AG04449 (cell line): ENCODE measurements at regions of chr20 and their contacts with region 1.

Region 1: DNA sequence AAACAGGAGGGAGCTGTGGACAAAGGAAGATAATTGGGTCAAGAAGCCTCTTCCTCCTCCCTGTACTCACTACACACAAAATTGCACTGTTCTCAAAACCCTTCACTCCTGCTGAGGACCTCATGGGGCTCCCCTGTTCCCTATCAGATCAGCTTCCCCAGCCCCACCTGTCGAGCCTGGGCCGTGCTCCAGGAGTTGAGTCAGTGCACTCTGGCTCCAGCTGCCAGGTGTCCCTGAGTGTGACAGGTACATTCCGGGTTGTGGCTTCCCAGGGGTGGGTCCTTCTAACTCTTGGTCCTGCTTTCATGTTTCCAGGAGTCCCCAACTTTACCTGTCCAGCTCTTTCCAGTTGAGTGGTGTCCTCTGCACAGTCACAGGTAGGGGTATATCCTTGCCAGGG is 8.4 kb downstream of the RAB5IF start:
- DNase-seq: no peak
- H3K4me3 ChIP-seq: no peak overlapping the region
- CTCF ChIP-seq: no peak

Region 2: DNA sequence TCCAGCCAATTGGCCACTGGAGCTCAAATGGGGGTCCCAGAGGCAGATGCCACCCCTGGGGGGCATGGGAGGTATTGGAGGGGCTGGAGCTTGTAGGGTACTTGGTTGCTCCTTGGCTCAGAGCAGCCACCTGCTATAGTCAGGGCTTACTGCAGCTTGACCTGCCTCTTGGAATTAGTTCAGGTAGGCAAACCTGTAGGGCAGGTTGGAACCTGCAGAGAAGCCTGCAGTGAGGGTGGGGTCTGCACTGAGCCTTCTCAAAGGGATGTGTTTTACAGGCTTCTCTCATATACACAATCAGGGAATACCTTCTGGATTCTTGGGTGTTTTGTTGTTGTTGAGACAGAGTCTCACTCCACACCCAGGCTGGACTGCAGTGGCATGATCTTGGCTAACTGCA is 166.9 kb before region 1 on chr20:
- CTCF ChIA-PET with region 1: no interaction called
- POLR2A ChIA-PET with region 1: no interaction called
- DNase-seq: no peak
- H3K4me3 ChIP-seq: no peak overlapping the region
- CTCF ChIP-seq: no peak

Region 3: GRCh38 chr20:36624068-36624943 is 10.3 kb after region 1 on chr20:
- CTCF ChIA-PET with region 1: interaction called, 12 read pairs
- POLR2A ChIA-PET with region 1: no interaction called
- DNase-seq: no peak
- H3K4me3 ChIP-seq: no peak overlapping the region
- CTCF ChIP-seq: no peak

Region 4: GRCh38 chr20:36754656-36755222 is 140.8 kb after region 1 on chr20:
- CTCF ChIA-PET with region 1: interaction called, 98 read pairs
- POLR2A ChIA-PET with region 1: no interaction called
- DNase-seq: peak; percentile 10
- H3K4me3 ChIP-seq: no peak overlapping the region
- CTCF ChIP-seq: peak; percentile 83

Region 5: GRCh38 chr20:36881888-36882287 is 267.9 kb after region 1 on chr20:
- CTCF ChIA-PET with region 1: interaction called, 31 read pairs
- POLR2A ChIA-PET with region 1: no interaction called
- DNase-seq: no peak
- H3K4me3 ChIP-seq: no peak overlapping the region
- CTCF ChIP-seq: no peak

Region 6: DNA sequence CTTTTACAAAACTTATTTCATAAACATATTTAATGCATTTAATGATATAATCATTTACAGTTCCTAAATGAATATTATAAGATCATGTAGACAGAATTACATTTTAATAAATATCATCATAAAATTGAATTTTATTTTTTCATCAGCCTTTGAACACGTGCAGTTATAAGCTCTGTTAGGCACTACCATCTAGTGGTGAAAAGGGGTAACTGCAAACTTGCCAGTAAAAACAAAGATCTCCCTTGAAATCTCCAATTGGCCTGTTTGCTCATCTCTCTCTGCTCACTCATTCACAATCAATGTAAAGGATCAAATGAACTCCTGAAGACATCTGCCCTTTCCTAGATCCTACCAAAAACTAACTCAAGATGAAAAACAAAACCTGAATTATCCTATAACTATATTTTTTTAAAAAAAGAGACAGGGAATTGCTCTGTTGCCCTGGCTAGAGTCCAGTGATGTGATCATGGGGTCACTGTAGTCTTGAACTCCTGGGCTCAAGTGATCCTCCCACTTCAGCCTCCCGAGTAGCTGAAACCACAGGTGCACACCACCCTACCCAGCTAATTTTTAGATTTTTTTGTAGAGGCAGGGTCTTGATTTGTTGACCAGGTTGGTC is 305.9 kb after region 1 on chr20:
- CTCF ChIA-PET with region 1: interaction called, 31 read pairs
- POLR2A ChIA-PET with region 1: no interaction called
- DNase-seq: no peak
- H3K4me3 ChIP-seq: no peak overlapping the region
- CTCF ChIP-seq: peak; percentile 70

Region 7: DNA sequence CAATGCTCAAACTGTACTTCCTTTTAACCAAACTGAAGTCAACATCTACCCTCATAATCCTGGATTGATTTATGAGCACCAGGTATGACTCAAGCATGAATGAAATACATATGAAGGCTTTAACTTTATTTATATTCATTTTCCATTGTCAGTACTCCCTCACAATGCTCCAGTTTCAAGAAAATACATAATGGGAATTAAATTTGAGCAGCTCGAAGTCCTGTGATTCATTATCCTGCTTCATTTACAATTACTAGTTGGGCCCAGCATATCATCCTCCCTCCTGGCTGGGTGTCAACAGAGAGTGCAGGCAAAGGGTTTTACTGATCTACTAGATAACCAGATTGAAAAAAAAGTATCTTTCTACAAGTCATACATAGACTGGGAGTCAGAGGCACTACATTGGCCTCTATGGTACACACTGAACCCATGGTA is 327.4 kb after region 1 on chr20:
- CTCF ChIA-PET with region 1: no interaction called
- POLR2A ChIA-PET with region 1: no interaction called
- DNase-seq: no peak
- H3K4me3 ChIP-seq: no peak overlapping the region
- CTCF ChIP-seq: no peak